Naive thymus-derived CD4-positive, alpha-beta T cell (primary cell): ENCODE measurements at regions of chr12 and their contacts with region 1.

Region 1: GRCh38 chr12:109093022-109093918 is at the start of gene ALKBH2:
- DNase-seq: peak; percentile 91 to 96 (median 93)
- ATAC-seq: peak; percentile 87
- H3K4me3 ChIP-seq: peak within 1 kb of the TSS; percentile 62
- H3K4me3 Mint-ChIP-seq: peak within 1 kb of the TSS; percentile 80 to 93 (median 90)
- H3K27ac ChIP-seq: peak within 1 kb of the TSS; percentile 76
- H3K27ac Mint-ChIP-seq: peak within 1 kb of the TSS; percentile 88 to 96 (median 93)
- H3K4me1 ChIP-seq: peaks cover 18% of the 10 kb centered on the region in 2 donors
- H3K4me1 Mint-ChIP-seq: peaks cover 23 to 43% (median 36%) of the 10 kb centered on the region in 7 donors
- H3K27me3 ChIP-seq: no peaks in the 10 kb centered on the region
- H3K27me3 Mint-ChIP-seq: no peaks in the 10 kb centered on the region
- total RNA-seq, gene ALKBH2: 13.2 to 21.4 (median 17.6) TPM

Region 2: DNA sequence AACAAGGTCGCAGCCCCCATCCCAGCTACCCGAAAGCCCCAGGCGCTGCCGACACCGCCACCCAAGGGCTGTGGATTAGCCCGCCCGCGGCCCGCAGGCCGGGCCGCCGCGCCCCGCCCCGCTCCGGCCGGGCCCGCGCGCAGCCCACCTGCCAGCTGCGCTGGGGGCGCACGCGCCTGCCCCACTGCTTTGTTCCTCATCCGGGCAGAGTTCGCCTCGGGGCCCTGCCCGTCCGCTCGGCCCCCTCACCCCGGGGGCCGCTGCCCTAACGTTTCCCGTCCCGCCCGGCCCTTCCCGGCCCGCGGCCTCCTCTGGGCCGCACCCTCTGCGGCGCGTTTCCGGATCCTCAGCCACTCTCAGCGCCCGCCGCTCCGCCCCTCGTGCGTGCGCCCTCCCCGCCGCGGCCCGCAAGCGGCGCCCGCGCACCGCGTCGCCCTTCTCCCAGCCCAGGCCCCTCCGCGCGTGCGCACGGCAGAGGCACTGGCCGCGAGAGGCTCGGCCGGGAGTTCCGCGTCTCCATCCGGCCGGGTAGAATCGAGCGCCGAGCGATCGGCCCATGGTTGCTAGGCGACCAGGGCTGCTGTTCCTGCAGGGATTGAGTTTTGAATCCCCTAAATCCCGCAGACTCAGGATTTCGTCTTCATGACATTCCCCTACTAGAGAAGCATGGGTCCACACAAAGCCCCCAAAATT is 1332.3 kb before region 1 on chr12 and contains the start of gene PRDM4:
- CTCF ChIA-PET with region 1: no interaction called
- POLR2A ChIA-PET with region 1: no interaction called
- intact Hi-C with region 1: loop called in 1 of 2 experiments (anchors 2 kb)
- DNase-seq: peak; percentile 85 to 96 (median 93)
- ATAC-seq: peak; percentile 99
- H3K4me3 ChIP-seq: peak within 1 kb of the TSS; percentile 83
- H3K4me3 Mint-ChIP-seq: peak within 1 kb of the TSS; percentile 85 to 94 (median 91)
- H3K27ac ChIP-seq: peak within 1 kb of the TSS; percentile 78
- H3K27ac Mint-ChIP-seq: peak within 1 kb of the TSS; percentile 85 to 96 (median 91)
- H3K4me1 ChIP-seq: peaks cover 21% of the 10 kb centered on the region in 2 donors
- H3K4me1 Mint-ChIP-seq: peaks cover 19 to 52% (median 35%) of the 10 kb centered on the region in 7 donors
- H3K27me3 ChIP-seq: no peaks in the 10 kb centered on the region
- H3K27me3 Mint-ChIP-seq: peaks cover 0 to 5% (median 0%) of the 10 kb centered on the region in 5 donors
- total RNA-seq, gene PRDM4: 32.4 to 41.3 (median 36.4) TPM

Region 3: GRCh38 chr12:108633534-108634248 is 459.6 kb before region 1 on chr12 and contains the start of gene SELPLG:
- CTCF ChIA-PET with region 1: interaction called, 3 read pairs
- POLR2A ChIA-PET with region 1: interaction called, 6 read pairs
- intact Hi-C with region 1: loop called in 1 of 2 experiments (anchors 2 kb)
- DNase-seq: peak; percentile 70 to 96 (median 93)
- ATAC-seq: peak; percentile 83
- H3K4me3 ChIP-seq: peak within 1 kb of the TSS; percentile 98
- H3K4me3 Mint-ChIP-seq: peak within 1 kb of the TSS; percentile 90 to 100 (median 99)
- H3K27ac ChIP-seq: peak within 1 kb of the TSS; percentile 89
- H3K27ac Mint-ChIP-seq: peak within 1 kb of the TSS; percentile 95 to 100 (median 98)
- H3K4me1 ChIP-seq: peaks cover 50 to 53% of the 10 kb centered on the region in 2 donors
- H3K4me1 Mint-ChIP-seq: peaks cover 50 to 73% (median 66%) of the 10 kb centered on the region in 7 donors
- H3K27me3 ChIP-seq: no peaks in the 10 kb centered on the region
- H3K27me3 Mint-ChIP-seq: no peaks in the 10 kb centered on the region
- total RNA-seq, gene SELPLG: 54.3 to 217 (median 154) TPM

Region 4: GRCh38 chr12:108803428-108804105 is 289.7 kb before region 1 on chr12:
- CTCF ChIA-PET with region 1: no interaction called
- POLR2A ChIA-PET with region 1: no interaction called
- intact Hi-C with region 1: loop called (anchors 1 to 5 kb)
- DNase-seq: peak; percentile 25 to 78 (median 70)
- ATAC-seq: peak; percentile 93
- H3K4me3 ChIP-seq: no peak overlapping the region
- H3K4me3 Mint-ChIP-seq: no peak overlapping the region
- H3K27ac ChIP-seq: no peak overlapping the region
- H3K27ac Mint-ChIP-seq: peak overlapping the region in 3 of 9 donors; percentile 37 to 62 (median 48)
- H3K4me1 ChIP-seq: peaks cover 0 to 3% of the 10 kb centered on the region in 2 donors
- H3K4me1 Mint-ChIP-seq: peaks cover 0 to 10% (median 3%) of the 10 kb centered on the region in 7 donors
- H3K27me3 ChIP-seq: no peaks in the 10 kb centered on the region
- H3K27me3 Mint-ChIP-seq: no peaks in the 10 kb centered on the region

Region 5: GRCh38 chr12:108914121-108914531 is 179.1 kb before region 1 on chr12:
- CTCF ChIA-PET with region 1: no interaction called
- POLR2A ChIA-PET with region 1: no interaction called
- intact Hi-C with region 1: no loop called
- DNase-seq: no peak
- ATAC-seq: peak; percentile 57
- H3K4me3 ChIP-seq: no peak overlapping the region
- H3K4me3 Mint-ChIP-seq: no peak overlapping the region
- H3K27ac ChIP-seq: no peak overlapping the region
- H3K27ac Mint-ChIP-seq: no peak overlapping the region
- H3K4me1 ChIP-seq: no peaks in the 10 kb centered on the region
- H3K4me1 Mint-ChIP-seq: peaks cover 0 to 6% (median 0%) of the 10 kb centered on the region in 7 donors
- H3K27me3 ChIP-seq: no peaks in the 10 kb centered on the region
- H3K27me3 Mint-ChIP-seq: no peaks in the 10 kb centered on the region

Region 6: DNA sequence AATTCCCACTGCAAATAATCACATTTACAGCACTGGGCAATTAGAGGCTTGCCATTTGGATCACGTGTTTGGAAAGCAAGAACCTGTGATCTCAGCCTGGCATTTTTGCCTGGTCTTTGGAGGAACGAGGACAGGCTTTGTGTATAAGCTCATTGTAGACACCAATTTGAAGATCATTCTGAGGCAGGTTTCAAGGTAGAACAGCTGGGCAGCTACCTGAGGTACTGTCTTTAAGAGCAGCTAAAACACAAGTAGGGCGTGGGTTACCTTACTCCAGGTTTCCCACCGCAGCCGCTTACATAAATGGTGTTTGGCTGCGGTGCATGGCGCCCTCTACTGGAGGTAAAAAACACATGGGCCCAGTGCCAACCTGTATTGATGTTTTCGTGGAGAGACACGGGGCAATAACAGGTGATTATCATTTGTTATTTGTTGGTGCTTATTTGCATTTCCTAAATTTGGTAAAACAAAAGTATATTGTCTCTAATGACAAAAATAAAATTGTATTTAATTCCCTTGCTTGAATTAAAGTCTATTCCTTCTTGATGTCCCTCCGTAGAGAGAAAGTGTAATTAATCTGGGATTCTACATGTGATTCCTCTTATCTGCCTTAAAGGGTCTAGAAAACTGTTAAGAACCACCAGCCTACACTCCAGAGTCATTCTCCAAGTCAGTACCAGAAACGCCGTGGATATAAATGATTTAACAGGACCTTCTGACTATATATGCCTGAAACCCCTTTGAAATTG is 142.1 kb before region 1 on chr12:
- CTCF ChIA-PET with region 1: interaction called, 3 read pairs
- POLR2A ChIA-PET with region 1: no interaction called
- intact Hi-C with region 1: loop called (anchors 1 kb)
- DNase-seq: peak; percentile 49 to 70 (median 63)
- ATAC-seq: peak; percentile 94
- H3K4me3 ChIP-seq: no peak overlapping the region
- H3K4me3 Mint-ChIP-seq: no peak overlapping the region
- H3K27ac ChIP-seq: no peak overlapping the region
- H3K27ac Mint-ChIP-seq: peak overlapping the region in 1 of 9 donors; percentile 4
- H3K4me1 ChIP-seq: no peaks in the 10 kb centered on the region
- H3K4me1 Mint-ChIP-seq: peaks cover 0 to 6% (median 4%) of the 10 kb centered on the region in 7 donors
- H3K27me3 ChIP-seq: no peaks in the 10 kb centered on the region
- H3K27me3 Mint-ChIP-seq: peaks cover 7 to 24% (median 17%) of the 10 kb centered on the region in 5 donors

Region 7: DNA sequence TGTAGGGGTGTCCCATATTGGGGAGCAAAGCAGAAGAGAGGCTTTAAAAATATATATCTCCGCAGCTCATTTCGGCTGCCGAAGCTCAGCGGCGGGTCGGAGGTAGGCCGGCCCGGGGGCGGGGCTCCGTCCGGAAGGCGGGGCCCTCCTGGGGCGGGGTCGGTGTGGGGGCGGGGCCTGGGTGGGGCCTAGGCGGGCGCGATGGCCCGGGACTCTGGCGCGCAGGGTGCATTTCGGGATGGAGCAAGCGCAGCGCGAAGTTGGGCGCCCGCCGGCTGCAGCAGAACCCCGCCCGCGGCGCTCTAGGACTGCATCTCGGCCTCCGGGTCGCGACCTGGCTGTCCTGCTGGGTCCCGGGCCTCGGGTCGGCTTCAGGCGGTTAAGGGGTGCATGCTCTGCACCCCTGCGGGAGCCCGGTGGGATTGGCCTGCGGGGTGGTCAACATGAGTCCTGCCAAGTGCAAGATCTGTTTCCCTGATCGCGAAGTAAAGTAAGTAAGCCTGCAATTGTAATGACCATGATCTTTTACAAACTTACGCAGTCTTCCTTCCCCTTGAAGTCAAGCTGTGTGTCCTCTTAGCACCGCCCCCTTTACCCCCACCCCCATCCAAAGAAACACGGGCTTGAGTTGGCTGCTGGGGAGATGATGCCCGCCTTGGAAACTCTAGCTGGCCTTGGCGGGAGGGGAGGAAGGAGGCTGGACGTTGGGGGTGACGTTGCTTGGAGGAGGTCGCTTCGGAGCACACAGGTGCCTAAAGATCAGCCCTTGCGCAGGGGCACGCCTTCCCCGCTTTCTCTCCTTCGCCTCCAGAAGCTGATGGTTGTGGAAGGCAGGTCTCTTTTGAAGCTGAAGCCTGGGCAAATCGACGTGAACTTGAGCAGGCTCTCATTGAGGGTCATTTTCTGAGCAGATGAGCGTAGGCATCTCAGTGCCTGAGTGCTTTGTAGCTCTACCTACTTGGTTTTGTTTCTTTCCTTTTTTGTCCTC is 61.5 kb after region 1 on chr12:
- CTCF ChIA-PET with region 1: no interaction called
- POLR2A ChIA-PET with region 1: no interaction called
- intact Hi-C with region 1: loop called (anchors 1 to 2 kb)
- DNase-seq: peak; percentile 58 to 87 (median 76)
- ATAC-seq: peak; percentile 99
- H3K4me3 ChIP-seq: peak overlapping the region; percentile 73
- H3K4me3 Mint-ChIP-seq: peak overlapping the region; percentile 85 to 98 (median 95)
- H3K27ac ChIP-seq: peak overlapping the region; percentile 61
- H3K27ac Mint-ChIP-seq: peak overlapping the region; percentile 71 to 95 (median 87)
- H3K4me1 ChIP-seq: peaks cover 5 to 10% of the 10 kb centered on the region in 2 donors
- H3K4me1 Mint-ChIP-seq: peaks cover 13 to 33% (median 19%) of the 10 kb centered on the region in 7 donors
- H3K27me3 ChIP-seq: no peaks in the 10 kb centered on the region
- H3K27me3 Mint-ChIP-seq: peaks cover 0 to 19% (median 0%) of the 10 kb centered on the region in 5 donors

Region 8: DNA sequence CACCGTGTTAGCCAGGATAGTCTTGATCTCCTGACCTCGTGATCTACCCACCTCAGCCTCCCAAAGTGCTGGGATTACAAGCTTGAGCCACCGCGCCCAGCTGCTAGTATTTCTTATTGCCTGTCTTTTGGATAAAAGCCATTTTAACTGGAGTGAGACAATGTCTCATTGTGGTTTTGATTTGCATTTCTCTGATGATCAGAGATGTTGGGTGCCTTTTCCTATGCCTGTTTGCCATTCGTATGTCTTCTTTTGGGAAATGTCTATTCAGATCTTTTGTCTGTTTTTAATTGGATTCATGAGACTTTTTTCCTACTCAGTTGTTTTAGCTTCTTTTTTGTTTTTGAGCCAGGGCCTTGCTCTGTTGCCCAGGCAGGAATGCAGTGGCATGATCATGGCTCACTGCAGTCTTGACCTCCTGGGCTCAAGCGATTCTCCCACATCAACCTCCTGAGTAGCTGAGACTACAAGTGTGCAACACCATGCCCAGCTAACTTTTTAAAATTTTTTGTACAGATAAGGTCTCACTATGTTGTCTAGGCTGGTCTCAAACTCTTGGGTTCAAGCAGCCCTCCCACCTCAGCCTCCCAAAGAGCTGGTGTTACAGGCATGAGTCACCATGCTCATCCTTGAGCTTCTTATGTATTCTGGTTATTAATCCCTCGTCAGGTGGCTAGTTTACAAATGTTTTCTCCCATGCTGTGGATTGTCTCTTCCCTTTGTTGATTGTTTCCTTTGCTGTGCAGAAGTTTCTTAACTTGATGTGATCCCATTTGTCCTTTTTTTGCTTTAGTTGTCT is 89.0 kb after region 1 on chr12:
- CTCF ChIA-PET with region 1: no interaction called
- POLR2A ChIA-PET with region 1: no interaction called
- intact Hi-C with region 1: no loop called
- DNase-seq: no peak
- ATAC-seq: no peak
- H3K4me3 ChIP-seq: no peak overlapping the region
- H3K4me3 Mint-ChIP-seq: no peak overlapping the region
- H3K27ac ChIP-seq: no peak overlapping the region
- H3K27ac Mint-ChIP-seq: peak overlapping the region in 1 of 9 donors; percentile 13
- H3K4me1 ChIP-seq: no peaks in the 10 kb centered on the region
- H3K4me1 Mint-ChIP-seq: no peaks in the 10 kb centered on the region
- H3K27me3 ChIP-seq: no peaks in the 10 kb centered on the region
- H3K27me3 Mint-ChIP-seq: no peaks in the 10 kb centered on the region

Region 9: DNA sequence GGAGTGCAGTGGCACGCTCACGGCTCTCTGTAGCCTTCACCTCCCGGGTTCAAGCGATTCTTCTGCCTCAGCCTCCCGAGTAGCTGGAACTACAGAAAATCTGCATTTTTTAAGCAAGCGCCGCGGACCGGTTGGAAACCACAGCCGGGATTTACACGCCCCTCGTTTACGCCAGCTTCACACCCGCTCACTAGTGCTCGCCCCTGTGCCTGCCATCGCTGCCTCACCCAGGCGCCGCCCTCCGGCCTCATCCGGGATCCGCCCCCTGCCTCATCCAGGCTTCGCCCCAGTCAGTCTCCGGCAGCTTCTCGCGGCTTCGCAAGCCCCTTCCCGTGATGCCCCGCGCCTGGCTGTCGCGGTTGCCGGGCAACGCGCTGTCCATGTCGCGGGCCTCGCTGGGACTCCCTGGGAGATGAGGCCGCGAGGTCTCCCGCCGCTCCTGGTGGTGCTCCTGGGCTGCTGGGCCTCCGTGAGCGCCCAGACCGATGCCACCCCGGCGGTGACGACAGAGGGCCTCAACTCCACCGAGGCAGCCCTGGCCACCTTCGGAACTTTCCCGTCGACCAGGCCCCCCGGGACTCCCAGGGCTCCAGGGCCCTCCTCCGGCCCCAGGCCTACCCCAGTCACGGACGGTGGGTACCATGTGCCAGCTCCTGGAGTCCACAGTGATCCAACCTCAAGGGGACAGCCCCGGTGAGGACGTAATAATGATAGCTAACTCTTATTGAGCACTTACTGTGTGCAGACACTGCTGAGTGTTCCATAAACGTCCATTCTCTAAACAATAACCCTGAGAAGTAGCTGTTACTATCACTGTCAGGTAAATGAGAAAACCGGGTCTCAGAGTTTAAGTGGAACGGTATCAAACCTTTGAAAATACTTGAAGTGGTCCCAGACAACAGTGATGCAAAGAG is 1520.8 kb after region 1 on chr12 and contains the start of gene TCTN1:
- CTCF ChIA-PET with region 1: no interaction called
- POLR2A ChIA-PET with region 1: no interaction called
- intact Hi-C with region 1: loop called in 1 of 2 experiments (anchors 10 kb)
- DNase-seq: peak; percentile 88 to 98 (median 93)
- ATAC-seq: peak; percentile 100
- H3K4me3 ChIP-seq: peak within 1 kb of the TSS; percentile 75
- H3K4me3 Mint-ChIP-seq: peak within 1 kb of the TSS; percentile 81 to 89 (median 88)
- H3K27ac ChIP-seq: peak within 1 kb of the TSS; percentile 87
- H3K27ac Mint-ChIP-seq: peak within 1 kb of the TSS; percentile 31 to 92 (median 87)
- H3K4me1 ChIP-seq: peaks cover 4 to 6% of the 10 kb centered on the region in 2 donors
- H3K4me1 Mint-ChIP-seq: peaks cover 0 to 10% (median 4%) of the 10 kb centered on the region in 7 donors
- H3K27me3 ChIP-seq: no peaks in the 10 kb centered on the region
- H3K27me3 Mint-ChIP-seq: no peaks in the 10 kb centered on the region
- total RNA-seq, gene TCTN1: 5.2 to 13.0 (median 10.2) TPM